Panc1 (cell line): ENCODE measurements at regions of chr10 and their contacts with region 1.

Region 1: DNA sequence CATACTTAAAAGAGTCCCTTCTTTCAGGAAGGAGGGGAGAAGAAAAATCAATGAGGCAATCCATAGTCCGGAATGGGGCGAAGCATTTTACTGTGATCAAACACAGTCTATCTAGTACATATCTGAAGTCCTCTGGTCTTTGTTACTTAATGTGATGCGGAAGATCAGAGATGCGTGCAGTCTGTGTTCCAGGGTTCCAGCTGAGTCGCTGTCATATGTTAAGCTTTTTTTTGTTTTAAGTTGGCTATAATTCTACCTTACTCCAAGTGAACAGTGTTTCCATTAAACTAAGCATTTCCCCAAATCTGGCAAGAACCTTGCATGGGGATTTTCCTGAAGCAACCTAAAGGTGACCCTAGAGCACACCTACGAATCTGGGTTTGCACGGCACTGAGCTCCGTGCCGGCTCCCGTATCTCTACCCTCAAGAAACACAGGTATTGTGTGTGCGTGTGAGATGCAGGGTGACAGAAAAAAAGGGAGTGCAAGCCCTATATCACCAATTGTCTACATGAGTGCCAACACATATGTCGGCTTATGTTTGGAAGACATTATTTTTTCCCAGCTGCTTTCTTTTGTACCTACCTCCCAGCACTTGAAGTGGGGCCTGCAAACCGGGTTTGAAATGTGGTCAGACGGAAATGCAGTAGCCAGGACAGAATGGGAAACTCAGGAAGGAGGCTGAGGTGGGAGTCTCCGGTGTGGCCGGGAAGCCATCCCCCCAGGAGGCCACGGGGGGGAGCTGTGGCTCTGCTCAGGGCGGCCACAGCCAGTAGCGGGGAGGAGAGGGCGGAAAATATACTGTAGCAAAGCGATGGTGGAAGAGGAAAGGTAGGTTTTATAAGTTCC is 435.8 kb upstream of the MGMT start:
- DNase-seq: peak; percentile 18
- ATAC-seq: peak; percentile 98
- H3K4me3 ChIP-seq: no peak overlapping the region
- H3K27ac ChIP-seq: no peak overlapping the region
- H3K4me1 ChIP-seq: no peaks in the 10 kb centered on the region
- H3K27me3 ChIP-seq: peaks cover 61% of the 10 kb centered on the region
- CTCF ChIP-seq: peak; percentile 97

Region 2: GRCh38 chr10:128883231-128884032 is 147.8 kb before region 1 on chr10:
- CTCF ChIA-PET with region 1: no interaction called
- POLR2A ChIA-PET with region 1: no interaction called
- in situ Hi-C with region 1: no loop called
- intact Hi-C with region 1: no loop called
- DNase-seq: no peak
- ATAC-seq: no peak
- H3K4me3 ChIP-seq: no peak overlapping the region
- H3K27ac ChIP-seq: no peak overlapping the region
- H3K4me1 ChIP-seq: no peaks in the 10 kb centered on the region
- H3K27me3 ChIP-seq: no peaks in the 10 kb centered on the region
- CTCF ChIP-seq: no peak

Region 3: DNA sequence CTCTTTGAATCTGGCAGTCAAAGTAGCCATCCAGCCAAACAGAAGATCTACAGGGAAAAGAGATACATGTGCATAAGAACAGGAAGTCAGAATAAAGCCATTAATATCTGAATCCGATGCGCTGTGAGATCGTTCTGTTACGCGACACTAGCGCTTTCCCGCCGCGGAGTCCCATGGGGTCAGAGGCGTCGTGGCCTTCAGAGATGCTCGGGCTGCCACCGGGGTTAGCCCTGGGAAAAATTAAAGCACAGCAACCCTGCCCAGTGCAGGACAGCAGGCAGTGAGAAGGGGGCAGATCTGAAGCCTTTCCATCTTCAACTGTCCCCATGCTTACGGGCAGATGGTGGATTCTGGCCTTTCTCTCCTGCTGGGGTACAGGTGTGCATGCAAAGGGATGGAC is 210.2 kb after region 1 on chr10:
- CTCF ChIA-PET with region 1: no interaction called
- POLR2A ChIA-PET with region 1: no interaction called
- in situ Hi-C with region 1: no loop called
- intact Hi-C with region 1: no loop called
- DNase-seq: no peak
- ATAC-seq: no peak
- H3K4me3 ChIP-seq: no peak overlapping the region
- H3K27ac ChIP-seq: no peak overlapping the region
- H3K4me1 ChIP-seq: no peaks in the 10 kb centered on the region
- H3K27me3 ChIP-seq: no peaks in the 10 kb centered on the region; the same call in 1 of the 2 replicates
- CTCF ChIP-seq: no peak

Region 4: GRCh38 chr10:129971381-129972144 is 940.3 kb after region 1 on chr10:
- CTCF ChIA-PET with region 1: no interaction called
- POLR2A ChIA-PET with region 1: no interaction called
- in situ Hi-C with region 1: no loop called
- intact Hi-C with region 1: loop called (anchors 5 kb)
- DNase-seq: no peak
- ATAC-seq: peak; percentile 96
- H3K4me3 ChIP-seq: peak overlapping the region; percentile 37 to 44
- H3K27ac ChIP-seq: no peak overlapping the region
- H3K4me1 ChIP-seq: peaks cover 9% of the 10 kb centered on the region
- H3K27me3 ChIP-seq: peaks cover 18% of the 10 kb centered on the region
- CTCF ChIP-seq: peak; percentile 99

Region 5: GRCh38 chr10:130127364-130128061 is 1096.3 kb after region 1 on chr10:
- CTCF ChIA-PET with region 1: no interaction called
- POLR2A ChIA-PET with region 1: no interaction called
- in situ Hi-C with region 1: no loop called
- intact Hi-C with region 1: loop called (anchors 10 kb)
- DNase-seq: peak; percentile 65
- ATAC-seq: peak; percentile 98
- H3K4me3 ChIP-seq: no peak overlapping the region
- H3K27ac ChIP-seq: no peak overlapping the region
- H3K4me1 ChIP-seq: peaks cover 13% of the 10 kb centered on the region
- H3K27me3 ChIP-seq: no peaks in the 10 kb centered on the region; the same call in 1 of the 2 replicates
- CTCF ChIP-seq: peak; percentile 96